Endothelial cell of umbilical vein (primary cell): ENCODE measurements at regions of chr2 and their contacts with region 1.

Region 1: DNA sequence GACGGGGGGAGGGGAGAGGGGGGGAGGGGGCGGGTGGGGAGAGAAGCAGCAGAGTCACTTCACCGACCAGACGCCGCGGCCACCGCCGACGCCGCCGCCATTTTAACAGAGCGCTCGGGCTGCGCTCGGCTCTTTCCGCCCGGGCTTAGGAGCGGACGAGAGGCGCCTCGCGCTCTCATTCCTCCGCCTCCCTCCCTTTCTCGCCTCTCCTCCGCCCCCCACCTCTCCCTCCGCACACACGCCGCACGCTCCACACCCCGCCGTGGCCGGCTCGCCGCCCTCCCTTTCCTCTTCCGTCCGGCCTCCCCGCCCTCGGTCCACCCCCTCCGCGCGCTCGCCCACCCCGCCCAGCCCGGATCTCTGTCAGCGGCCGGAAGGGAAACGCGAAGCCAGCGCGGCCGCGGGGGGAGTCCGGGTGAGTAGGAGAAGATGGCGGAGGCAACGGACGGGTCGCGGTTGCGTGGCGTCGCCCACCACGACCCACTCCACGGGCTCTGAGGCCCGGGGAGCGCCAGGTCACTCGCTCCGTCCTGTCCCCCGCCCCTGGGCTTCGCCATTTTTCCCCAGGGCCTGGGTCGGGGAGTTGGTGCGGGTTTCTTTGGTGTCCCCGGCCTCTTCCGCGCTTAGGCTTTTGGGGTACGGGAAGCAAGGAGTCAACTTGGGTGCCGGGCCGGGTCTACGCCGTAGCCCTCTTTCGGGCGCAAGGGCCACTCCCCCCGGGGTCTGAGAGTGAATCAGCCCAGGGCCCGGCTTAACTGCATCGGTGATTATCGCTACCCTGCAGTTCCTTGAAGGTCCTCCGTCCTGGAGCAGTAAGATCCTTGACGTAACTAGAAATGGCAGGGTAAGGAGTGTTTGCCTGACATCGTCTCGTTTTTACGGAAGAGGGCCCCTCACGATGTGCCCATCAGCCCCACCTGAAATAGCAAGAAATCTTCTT is at the start of gene USP34:
- DNase-seq: peak; percentile 96
- H3K4me3 ChIP-seq: peak within 1 kb of the TSS; percentile 73 to 98 (median 94)
- H3K27ac ChIP-seq: peak within 1 kb of the TSS; percentile 96
- H3K4me1 ChIP-seq: peaks cover 12% of the 10 kb centered on the region
- H3K27me3 ChIP-seq: no peaks in the 10 kb centered on the region
- CTCF ChIP-seq: no peak
- POLR2A ChIP-seq: peak; percentile 89
- total RNA-seq, gene USP34: 96.9 and 98.3 TPM in 2 replicates

Region 2: GRCh38 chr2:60341151-60341550 is 1130.1 kb before region 1 on chr2:
- CTCF ChIA-PET with region 1: no interaction called
- POLR2A ChIA-PET with region 1: no interaction called
- dilution Hi-C with region 1: no loop called
- intact Hi-C with region 1: no loop called
- DNase-seq: no peak
- H3K4me3 ChIP-seq: no peak overlapping the region
- H3K27ac ChIP-seq: no peak overlapping the region
- H3K4me1 ChIP-seq: no peaks in the 10 kb centered on the region
- H3K27me3 ChIP-seq: no peaks in the 10 kb centered on the region
- CTCF ChIP-seq: no peak
- POLR2A ChIP-seq: no peak

Region 3: DNA sequence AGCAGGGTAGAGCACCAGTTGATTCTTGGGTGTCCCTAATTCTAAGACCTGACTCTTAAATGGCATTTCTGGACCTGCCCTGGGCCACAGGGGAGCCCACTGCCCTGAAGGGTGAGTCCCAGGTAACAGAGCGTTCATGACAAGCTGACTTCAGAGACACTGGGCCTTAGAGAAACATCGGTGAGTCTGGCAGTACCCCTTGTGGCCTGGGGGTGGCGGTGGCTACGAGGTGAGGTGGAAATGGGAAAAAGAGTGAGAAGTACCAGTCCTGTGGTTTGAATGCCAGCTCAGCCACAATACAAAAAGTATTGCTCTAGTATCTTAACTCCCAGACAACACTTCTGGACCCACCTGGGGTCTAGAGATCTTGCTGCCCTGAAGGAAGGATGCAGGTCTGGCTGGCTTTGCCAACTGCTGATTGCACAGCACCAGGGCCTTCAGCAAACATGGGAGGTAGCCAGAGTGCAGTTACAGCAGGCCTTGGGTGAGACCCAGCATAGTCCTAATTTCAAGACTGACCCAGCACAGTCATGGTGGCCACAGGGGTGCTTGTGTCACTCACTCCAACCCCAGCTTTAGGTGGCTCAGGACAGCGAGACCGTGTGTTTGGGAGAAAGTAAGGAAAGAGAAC is 44.9 kb before region 1 on chr2:
- CTCF ChIA-PET with region 1: interaction called, 4 read pairs
- POLR2A ChIA-PET with region 1: no interaction called
- dilution Hi-C with region 1: no loop called
- intact Hi-C with region 1: loop called (anchors 2 kb)
- DNase-seq: peak; percentile 36
- H3K4me3 ChIP-seq: no peak overlapping the region
- H3K27ac ChIP-seq: no peak overlapping the region
- H3K4me1 ChIP-seq: peaks cover 34% of the 10 kb centered on the region
- H3K27me3 ChIP-seq: no peaks in the 10 kb centered on the region
- CTCF ChIP-seq: peak; percentile 44 to 52
- POLR2A ChIP-seq: no peak

Region 4: GRCh38 chr2:61460163-61460562 is 11.1 kb before region 1 on chr2:
- CTCF ChIA-PET with region 1: no interaction called
- POLR2A ChIA-PET with region 1: no interaction called
- dilution Hi-C with region 1: no loop called
- intact Hi-C with region 1: loop called (anchors 1 kb)
- DNase-seq: peak; percentile 82
- H3K4me3 ChIP-seq: no peak overlapping the region
- H3K27ac ChIP-seq: peak overlapping the region; percentile 80
- H3K4me1 ChIP-seq: peaks cover 13% of the 10 kb centered on the region
- H3K27me3 ChIP-seq: no peaks in the 10 kb centered on the region
- CTCF ChIP-seq: no peak
- POLR2A ChIP-seq: no peak